ENCODE measurements at regions of chr17 and their contacts with region 1.

Region 1: GRCh38 chr17:44170499-44171201 is at the start of gene ASB16:
- DNase-seq: no peak
- H3K4me3 ChIP-seq: no peak within 1 kb of the TSS
- H3K27ac ChIP-seq: no peak within 1 kb of the TSS
- H3K4me1 ChIP-seq: no peaks in the 10 kb centered on the region
- H3K27me3 ChIP-seq: no peaks in the 10 kb centered on the region
- CTCF ChIP-seq: no peak
- POLR2A ChIP-seq: no peak
- total RNA-seq, gene ASB16: not detected in 2 replicates

Region 2: GRCh38 chr17:43907425-43907981 is 263.1 kb before region 1 on chr17 and contains the start of gene MPP2:
- CTCF ChIA-PET with region 1: interaction called, 19 read pairs
- POLR2A ChIA-PET with region 1: no interaction called
- dilution Hi-C with region 1: no loop called
- intact Hi-C with region 1: no loop called
- DNase-seq: peak; percentile 55
- H3K4me3 ChIP-seq: peak within 1 kb of the TSS in 1 of 3 experiments; percentile 26
- H3K27ac ChIP-seq: no peak within 1 kb of the TSS
- H3K4me1 ChIP-seq: peaks cover 3% of the 10 kb centered on the region
- H3K27me3 ChIP-seq: peaks cover 44 to 51% of the 10 kb centered on the region in 2 experiments
- CTCF ChIP-seq: peak in 1 of 2 donors; percentile 23
- POLR2A ChIP-seq: no peak
- total RNA-seq, gene MPP2: 1.2 and 1.6 TPM in 2 replicates

Region 3: GRCh38 chr17:44044067-44044466 is 126.6 kb before region 1 on chr17:
- CTCF ChIA-PET with region 1: interaction called, 10 read pairs
- POLR2A ChIA-PET with region 1: no interaction called
- dilution Hi-C with region 1: no loop called
- intact Hi-C with region 1: no loop called
- DNase-seq: peak; percentile 11
- H3K4me3 ChIP-seq: no peak overlapping the region
- H3K27ac ChIP-seq: no peak overlapping the region
- H3K4me1 ChIP-seq: peaks cover 9% of the 10 kb centered on the region
- H3K27me3 ChIP-seq: no peaks in the 10 kb centered on the region
- CTCF ChIP-seq: no peak
- POLR2A ChIP-seq: no peak

Region 4: GRCh38 chr17:44123356-44124117 is 47.1 kb before region 1 on chr17 and contains the start of gene HDAC5:
- CTCF ChIA-PET with region 1: interaction called, 11 read pairs
- POLR2A ChIA-PET with region 1: interaction called, 4 read pairs
- dilution Hi-C with region 1: no loop called
- intact Hi-C with region 1: no loop called
- DNase-seq: peak; percentile 95
- H3K4me3 ChIP-seq: peak within 1 kb of the TSS; percentile 58 to 80 (median 78)
- H3K27ac ChIP-seq: peak within 1 kb of the TSS; percentile 51
- H3K4me1 ChIP-seq: peaks cover 7% of the 10 kb centered on the region
- H3K27me3 ChIP-seq: peaks cover 2 to 7% of the 10 kb centered on the region in 2 experiments
- CTCF ChIP-seq: peak; percentile 51 to 63
- POLR2A ChIP-seq: no peak
- total RNA-seq, gene HDAC5: 40.2 and 40.4 TPM in 2 replicates

Region 5: DNA sequence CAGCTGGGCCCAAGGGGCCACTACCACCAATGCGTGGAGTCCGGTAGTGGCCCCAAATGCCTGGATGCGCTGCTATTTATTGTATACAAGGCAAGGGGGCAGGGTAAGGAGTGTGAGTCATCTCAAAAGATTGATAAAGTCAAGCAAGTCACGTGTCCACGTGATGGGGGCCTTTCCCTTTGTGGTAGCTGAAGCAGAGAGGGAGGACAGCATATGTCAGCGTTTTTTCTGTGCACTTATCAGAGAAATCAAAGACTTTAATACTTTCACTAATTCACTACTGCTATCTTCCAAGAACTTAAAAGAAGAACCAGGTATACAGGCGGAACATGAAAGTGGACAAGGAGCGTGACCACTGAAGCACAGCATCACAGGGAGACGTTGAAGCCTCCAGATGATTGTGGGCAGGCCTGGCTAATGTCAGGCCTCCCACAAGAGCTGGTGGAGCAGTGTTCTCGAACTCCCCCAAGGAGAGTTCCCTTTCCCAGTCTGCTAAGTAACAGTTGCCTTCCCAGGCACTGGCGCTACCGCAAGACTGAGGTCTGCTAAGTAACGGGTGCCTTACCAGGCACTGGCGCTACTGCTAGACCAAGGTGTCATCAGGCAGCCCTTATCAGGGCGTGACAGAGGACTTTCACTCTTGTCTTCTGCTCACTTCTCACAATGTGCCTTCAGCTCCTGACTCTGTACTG is 11.0 kb before region 1 on chr17:
- CTCF ChIA-PET with region 1: interaction called, 11 read pairs
- POLR2A ChIA-PET with region 1: no interaction called
- dilution Hi-C with region 1: no loop called
- intact Hi-C with region 1: no loop called
- DNase-seq: no peak
- H3K4me3 ChIP-seq: no peak overlapping the region
- H3K27ac ChIP-seq: no peak overlapping the region
- H3K4me1 ChIP-seq: no peaks in the 10 kb centered on the region
- H3K27me3 ChIP-seq: no peaks in the 10 kb centered on the region
- CTCF ChIP-seq: no peak
- POLR2A ChIP-seq: no peak

Region 6: GRCh38 chr17:44235583-44235936 is 64.9 kb after region 1 on chr17:
- CTCF ChIA-PET with region 1: no interaction called
- POLR2A ChIA-PET with region 1: no interaction called
- dilution Hi-C with region 1: no loop called
- intact Hi-C with region 1: no loop called
- DNase-seq: no peak
- H3K4me3 ChIP-seq: no peak overlapping the region
- H3K27ac ChIP-seq: no peak overlapping the region
- H3K4me1 ChIP-seq: peaks cover 8% of the 10 kb centered on the region
- H3K27me3 ChIP-seq: peaks cover 0 to 2% of the 10 kb centered on the region in 2 experiments
- CTCF ChIP-seq: no peak
- POLR2A ChIP-seq: no peak

Measured in endothelial cell of umbilical vein (primary cell).